Activated CD4-positive, alpha-beta memory T cell treated with anti-CD3 and anti-CD28 coated beads for 36 hours (primary cell): ENCODE measurements at regions of chr11 and their contacts with region 1.

Region 1: DNA sequence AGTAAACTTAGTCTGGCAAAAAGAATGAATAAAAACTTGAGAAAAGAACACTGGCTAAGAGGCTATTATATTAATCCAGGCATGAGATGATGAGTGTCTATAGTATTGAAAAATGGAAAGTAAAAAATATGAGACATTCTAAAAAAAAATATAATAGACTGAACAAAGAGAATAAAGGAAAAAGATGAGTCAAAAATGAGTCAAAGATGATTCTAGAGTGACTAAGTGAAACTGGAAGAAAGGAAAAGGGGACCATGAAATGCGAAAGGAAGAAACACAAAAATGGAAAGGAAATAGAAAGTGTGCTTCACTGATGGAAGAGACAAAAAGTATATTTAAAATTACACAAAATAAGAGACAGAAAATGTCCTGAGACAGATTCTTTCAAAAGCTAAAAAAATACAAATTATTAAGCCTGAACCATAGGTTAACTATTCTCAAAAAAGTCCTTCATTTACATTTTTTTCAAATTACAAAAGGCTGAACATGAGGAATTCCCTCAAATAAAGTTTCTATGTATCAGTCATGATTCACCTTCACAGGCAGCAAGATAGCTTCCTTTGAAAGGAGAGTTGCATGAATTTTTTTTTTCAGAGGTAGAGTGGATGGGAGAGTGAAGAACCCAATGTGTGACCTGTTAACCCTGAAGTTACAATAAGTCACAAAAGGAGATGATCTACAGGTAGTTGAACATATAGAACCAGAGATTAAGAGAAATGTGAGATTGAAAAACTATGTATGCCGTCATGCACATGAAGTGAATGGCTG is 75.2 kb downstream of the EIF3M start:
- DNase-seq: no peak
- H3K4me3 Mint-ChIP-seq: no peak overlapping the region
- H3K27ac Mint-ChIP-seq: no peak overlapping the region
- H3K4me1 Mint-ChIP-seq: peaks cover 10% of the 10 kb centered on the region
- H3K27me3 Mint-ChIP-seq: peaks cover 19% of the 10 kb centered on the region

Region 2: GRCh38 chr11:31655483-31655882 is 1003.3 kb before region 1 on chr11:
- CTCF ChIA-PET with region 1: no interaction called
- POLR2A ChIA-PET with region 1: no interaction called
- intact Hi-C with region 1: loop called (anchors 10 kb)
- DNase-seq: no peak
- H3K4me3 Mint-ChIP-seq: no peak overlapping the region
- H3K27ac Mint-ChIP-seq: no peak overlapping the region
- H3K4me1 Mint-ChIP-seq: peaks cover 7% of the 10 kb centered on the region
- H3K27me3 Mint-ChIP-seq: no peaks in the 10 kb centered on the region